ENCODE measurements at regions of chr21 and their contacts with region 1.

Region 1: DNA sequence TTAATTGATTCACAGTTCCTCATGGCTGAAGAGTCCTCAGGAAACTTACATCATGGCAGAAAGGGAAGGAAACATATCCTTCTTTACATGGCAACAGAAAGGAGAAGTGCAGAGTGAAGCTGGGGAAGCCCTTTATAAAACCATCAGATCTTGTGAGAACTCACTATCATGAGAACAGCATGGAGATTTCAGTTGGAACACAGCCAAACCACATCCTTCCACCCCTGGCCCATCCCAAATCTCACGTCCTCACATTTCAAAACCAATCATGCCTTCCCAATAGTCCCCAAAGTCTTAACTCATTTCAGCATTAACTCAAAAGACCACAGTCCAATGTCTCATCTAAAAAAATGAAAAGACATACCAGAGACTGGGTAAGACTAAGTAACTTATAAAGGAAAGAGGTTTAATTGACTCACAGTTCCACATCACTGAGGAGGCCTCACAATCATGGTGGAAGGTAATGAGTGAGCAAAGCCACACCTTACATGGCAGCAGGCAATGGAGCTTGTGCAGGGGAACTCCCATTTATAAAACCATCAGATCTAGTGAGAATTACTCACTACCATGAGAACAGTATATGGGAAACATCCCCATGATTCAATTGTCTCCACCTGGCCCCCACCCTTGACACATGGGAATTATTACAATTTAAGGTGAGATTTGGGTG is 105.2 kb downstream of the MRPL39 start:
- DNase-seq: no peak
- CTCF ChIP-seq: no peak

Region 2: DNA sequence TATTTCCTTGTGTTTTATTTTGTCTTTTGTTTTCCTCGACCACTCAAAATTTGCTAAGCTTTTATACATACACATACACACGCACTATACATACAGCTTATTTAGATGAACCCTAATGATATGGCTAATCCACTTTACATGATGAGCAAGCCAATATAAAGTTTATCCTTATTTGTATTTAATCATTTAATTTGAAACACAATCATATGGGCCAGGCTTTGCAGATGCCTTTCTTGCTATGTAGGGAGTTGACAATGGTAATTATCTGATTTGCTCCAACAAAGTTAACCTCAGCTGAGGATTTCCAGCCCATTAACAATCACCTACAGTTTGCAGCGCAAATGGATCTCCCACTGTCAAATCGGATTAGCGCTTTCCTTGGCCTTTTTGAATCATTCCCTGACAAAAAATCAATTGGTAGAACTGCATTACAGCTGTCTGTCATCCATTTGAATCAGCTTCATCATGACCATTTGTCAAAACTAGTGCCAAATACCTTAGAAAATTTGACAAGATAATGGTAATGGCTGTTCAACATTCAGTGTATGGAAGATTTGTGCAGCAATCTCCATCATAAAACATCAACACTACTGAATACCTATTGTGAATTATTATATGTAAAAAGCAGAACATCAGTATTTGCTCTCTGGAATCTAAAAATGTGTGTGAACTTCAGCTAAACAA is 247.5 kb before region 1 on chr21:
- in situ Hi-C with region 1: no loop called
- DNase-seq: no peak
- CTCF ChIP-seq: no peak

Region 3: DNA sequence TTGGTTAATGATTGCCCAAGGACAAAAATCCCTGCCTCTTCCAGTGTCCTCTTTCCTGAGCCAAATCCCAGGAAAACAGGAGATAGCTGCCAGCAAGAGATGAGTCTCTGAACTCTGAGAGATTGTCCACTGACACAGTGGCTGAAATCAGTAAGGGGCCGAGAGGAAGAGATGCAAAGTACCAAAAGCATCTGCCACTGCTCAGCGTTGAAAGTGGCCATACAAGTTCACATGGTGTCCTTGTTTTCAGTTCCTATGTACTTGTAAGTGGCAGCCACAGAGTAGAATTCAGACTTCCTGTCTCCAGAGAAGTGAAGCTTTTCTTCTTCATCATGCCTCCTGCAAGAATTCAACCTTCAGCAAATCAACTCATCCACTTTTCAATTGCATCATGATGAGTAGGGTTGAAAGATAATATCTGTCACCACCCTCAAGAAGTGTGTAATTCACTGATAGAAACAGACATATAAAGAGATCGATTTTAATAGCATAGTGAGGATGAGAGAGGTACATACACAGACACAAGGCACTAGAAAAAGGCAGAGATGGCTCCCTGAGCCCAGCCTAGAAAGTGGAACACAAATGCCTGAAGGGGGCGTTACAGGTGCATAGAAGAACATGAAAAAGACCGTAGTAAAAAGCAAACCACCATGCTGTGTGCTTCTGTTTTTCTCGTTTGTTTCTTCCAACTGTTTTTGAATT is 80.7 kb before region 1 on chr21:
- in situ Hi-C with region 1: loop called (anchors 10 kb)
- DNase-seq: peak; percentile 12
- CTCF ChIP-seq: peak; percentile 72

Region 4: GRCh38 chr21:25561668-25562641 is 59.8 kb after region 1 on chr21:
- in situ Hi-C with region 1: loop called (anchors 5 kb)
- DNase-seq: peak; percentile 64
- CTCF ChIP-seq: peak; percentile 43